Adrenal gland (tissue), 19 donors: ENCODE measurements at regions of chr12 and their contacts with region 1.

Region 1: GRCh38 chr12:15276088-15276698 is 46.1 kb upstream of the PTPRO start:
- DNase-seq: peak in 6 of 7 donors; percentile 17 to 53 (median 36)
- H3K4me3 ChIP-seq: no peak overlapping the region
- H3K27ac ChIP-seq: no peak overlapping the region
- H3K4me1 ChIP-seq: peaks cover 0 to 8% of the 10 kb centered on the region in 2 donors
- H3K27me3 ChIP-seq: peaks cover 3% of the 10 kb centered on the region
- CTCF ChIP-seq: peak; percentile 55 to 82 (median 76)
- POLR2A ChIP-seq: no peak

Region 2: DNA sequence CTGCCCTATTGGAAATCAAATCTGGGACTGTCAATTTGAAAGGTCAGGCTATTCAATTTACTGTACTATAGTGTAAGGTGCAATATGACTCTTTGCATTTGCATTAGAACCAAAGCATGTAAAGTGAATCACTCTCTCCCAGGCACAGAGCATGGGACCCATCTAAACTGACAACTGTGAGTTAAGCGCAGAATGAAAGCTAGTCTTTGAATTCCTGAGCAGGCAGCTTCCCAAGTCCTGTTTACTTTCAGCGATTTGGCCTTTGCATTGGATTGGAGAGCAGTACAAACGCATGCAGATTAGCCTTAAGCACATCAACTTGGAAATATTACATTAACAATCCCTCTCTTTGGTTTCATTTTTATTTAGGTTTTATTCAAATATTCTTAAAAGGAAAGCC is 129.6 kb before region 1 on chr12:
- intact Hi-C with region 1: no loop called
- DNase-seq: no peak
- H3K4me3 ChIP-seq: no peak overlapping the region
- H3K27ac ChIP-seq: peak overlapping the region in 1 of 5 donors; percentile 2
- H3K4me1 ChIP-seq: peaks cover 4 to 6% of the 10 kb centered on the region in 2 donors
- H3K27me3 ChIP-seq: no peaks in the 10 kb centered on the region
- CTCF ChIP-seq: no peak
- POLR2A ChIP-seq: no peak

Region 3: GRCh38 chr12:15220994-15221885 is 55.0 kb before region 1 on chr12 and contains the start of gene RERG:
- intact Hi-C with region 1: loop called in 1 of 2 experiments (anchors 10 kb)
- DNase-seq: peak; percentile 76 to 90 (median 83)
- H3K4me3 ChIP-seq: peak within 1 kb of the TSS in 3 of 4 donors; percentile 58 to 62 (median 62)
- H3K27ac ChIP-seq: peak within 1 kb of the TSS; percentile 10 to 89 (median 78)
- H3K4me1 ChIP-seq: peaks cover 0 to 33% of the 10 kb centered on the region in 2 donors
- H3K27me3 ChIP-seq: no peaks in the 10 kb centered on the region
- CTCF ChIP-seq: peak; percentile 90 to 99 (median 96)
- POLR2A ChIP-seq: peak in 1 of 2 donors; percentile 45
- total RNA-seq, gene RERG: 12.9 to 146 (median 86.1) TPM

Region 4: GRCh38 chr12:15515010-15515409 is 238.8 kb after region 1 on chr12:
- intact Hi-C with region 1: loop called (anchors 5 to 10 kb)
- DNase-seq: no peak
- H3K4me3 ChIP-seq: no peak overlapping the region
- H3K27ac ChIP-seq: no peak overlapping the region
- H3K4me1 ChIP-seq: no peaks in the 10 kb centered on the region
- H3K27me3 ChIP-seq: no peaks in the 10 kb centered on the region
- CTCF ChIP-seq: no peak
- POLR2A ChIP-seq: no peak

Region 5: GRCh38 chr12:15522565-15523187 is 246.5 kb after region 1 on chr12:
- intact Hi-C with region 1: loop called (anchors 5 to 10 kb)
- DNase-seq: no peak
- H3K4me3 ChIP-seq: no peak overlapping the region
- H3K27ac ChIP-seq: no peak overlapping the region
- H3K4me1 ChIP-seq: no peaks in the 10 kb centered on the region
- H3K27me3 ChIP-seq: no peaks in the 10 kb centered on the region
- CTCF ChIP-seq: peak; percentile 17 to 67 (median 58)
- POLR2A ChIP-seq: no peak

Region 6: GRCh38 chr12:15856097-15856982 is 580.1 kb after region 1 on chr12:
- intact Hi-C with region 1: loop called (anchors 10 kb)
- DNase-seq: peak; percentile 26 to 69 (median 58)
- H3K4me3 ChIP-seq: no peak overlapping the region
- H3K27ac ChIP-seq: no peak overlapping the region
- H3K4me1 ChIP-seq: no peaks in the 10 kb centered on the region
- H3K27me3 ChIP-seq: peaks cover 7% of the 10 kb centered on the region
- CTCF ChIP-seq: peak; percentile 67 to 95 (median 88)
- POLR2A ChIP-seq: no peak